AG04450 (cell line): ENCODE measurements at regions of chr6 and their contacts with region 1.

Region 1: GRCh38 chr6:141183368-141183767 is 949.4 kb upstream of the GJE1 start:
- DNase-seq: no peak
- H3K4me3 ChIP-seq: no peak overlapping the region
- H3K27ac ChIP-seq: no peak overlapping the region
- H3K27me3 ChIP-seq: no peaks in the 10 kb centered on the region
- CTCF ChIP-seq: no peak

Region 2: DNA sequence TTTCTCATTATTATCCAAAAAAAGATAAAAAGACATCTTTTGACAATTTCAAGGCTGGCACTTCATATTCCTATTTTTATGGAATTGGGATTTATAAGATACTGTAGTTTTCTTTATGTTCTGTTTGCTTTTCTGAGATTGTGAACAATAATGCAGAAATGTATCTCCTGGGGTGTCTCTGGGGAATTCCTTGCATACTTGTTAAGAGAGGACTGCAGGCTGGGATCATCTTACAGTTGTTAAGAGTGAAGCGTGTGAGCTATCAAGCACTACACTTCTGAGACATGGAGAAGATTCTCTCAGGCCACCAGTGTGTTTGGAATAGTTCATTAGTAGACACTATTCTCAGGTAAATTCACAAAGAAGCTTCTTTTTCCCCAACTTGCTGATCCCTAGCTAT is 13.9 kb before region 1 on chr6:
- CTCF ChIA-PET with region 1: no interaction called
- POLR2A ChIA-PET with region 1: no interaction called
- DNase-seq: peak; percentile 43
- H3K4me3 ChIP-seq: no peak overlapping the region
- H3K27ac ChIP-seq: no peak overlapping the region
- H3K27me3 ChIP-seq: no peaks in the 10 kb centered on the region
- CTCF ChIP-seq: no peak

Region 3: DNA sequence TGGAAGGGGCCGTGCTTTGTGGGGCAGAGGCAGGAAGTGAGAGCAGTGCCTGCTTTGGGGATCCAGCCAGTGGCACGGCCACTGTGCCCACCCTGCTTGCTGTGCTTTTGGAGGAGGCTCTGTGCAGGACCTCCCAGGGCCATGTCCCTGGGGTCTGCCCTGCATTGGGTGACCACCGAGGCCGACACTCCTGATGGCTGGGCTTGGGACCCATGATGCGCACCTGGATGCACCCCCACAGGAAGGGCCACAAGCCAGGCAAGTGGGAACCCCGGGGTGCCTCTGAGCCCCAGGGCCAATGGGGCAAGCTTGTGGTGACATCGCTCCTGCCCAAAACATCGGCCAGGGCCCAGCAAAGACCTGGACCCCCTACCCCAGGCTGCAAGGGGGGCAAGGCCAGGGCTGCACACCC is 210.8 kb after region 1 on chr6:
- CTCF ChIA-PET with region 1: no interaction called
- POLR2A ChIA-PET with region 1: interaction called, 13 read pairs
- DNase-seq: no peak
- H3K4me3 ChIP-seq: no peak overlapping the region
- H3K27ac ChIP-seq: no peak overlapping the region
- H3K27me3 ChIP-seq: no peaks in the 10 kb centered on the region
- CTCF ChIP-seq: no peak